ENCODE measurements at regions of chr7 and their contacts with region 1.

Region 1: GRCh38 chr7:56063882-56064625 is at the start of gene SUMF2:
- DNase-seq: peak; percentile 97
- ATAC-seq: peak; percentile 100
- total RNA-seq, gene SUMF2: 29.2 TPM

Region 2: GRCh38 chr7:55983537-55983936 is 80.5 kb before region 1 on chr7:
- intact Hi-C with region 1: loop called (anchors 10 kb)
- DNase-seq: no peak
- ATAC-seq: no peak

Region 3: GRCh38 chr7:56199639-56200038 is 135.6 kb after region 1 on chr7:
- intact Hi-C with region 1: no loop called
- DNase-seq: no peak
- ATAC-seq: no peak

Measured in left ventricle myocardium superior (tissue), 1 donor.